ENCODE measurements at regions of chr6 and their contacts with region 1.

Region 1: GRCh38 chr6:130020907-130021629 is 2.7 kb downstream of the L3MBTL3 start:
- DNase-seq: peak; percentile 97
- H3K4me3 ChIP-seq: peak overlapping the region; percentile 80
- H3K27ac ChIP-seq: peak overlapping the region; percentile 62
- H3K4me1 ChIP-seq: peaks cover 3% of the 10 kb centered on the region; the same call in 1 of the 2 replicates
- H3K27me3 ChIP-seq: no peaks in the 10 kb centered on the region

Region 2: GRCh38 chr6:129498950-129499842 is 521.9 kb before region 1 on chr6:
- in situ Hi-C with region 1: loop called (anchors 10 kb)
- DNase-seq: peak; percentile 72
- H3K4me3 ChIP-seq: peak overlapping the region; percentile 56
- H3K27ac ChIP-seq: peak overlapping the region; percentile 40
- H3K4me1 ChIP-seq: peaks cover 46% of the 10 kb centered on the region
- H3K27me3 ChIP-seq: no peaks in the 10 kb centered on the region

Region 3: GRCh38 chr6:129598244-129599187 is 422.6 kb before region 1 on chr6:
- in situ Hi-C with region 1: loop called (anchors 10 kb)
- DNase-seq: peak; percentile 82
- H3K4me3 ChIP-seq: no peak overlapping the region
- H3K27ac ChIP-seq: no peak overlapping the region
- H3K4me1 ChIP-seq: no peaks in the 10 kb centered on the region
- H3K27me3 ChIP-seq: no peaks in the 10 kb centered on the region

Region 4: GRCh38 chr6:130183271-130184222 is 162.5 kb after region 1 on chr6:
- in situ Hi-C with region 1: no loop called
- DNase-seq: no peak
- H3K4me3 ChIP-seq: no peak overlapping the region
- H3K27ac ChIP-seq: no peak overlapping the region
- H3K4me1 ChIP-seq: peaks cover 5% of the 10 kb centered on the region
- H3K27me3 ChIP-seq: no peaks in the 10 kb centered on the region